A549 (cell line): ENCODE measurements at regions of chr7 and their contacts with region 1.

Region 1: DNA sequence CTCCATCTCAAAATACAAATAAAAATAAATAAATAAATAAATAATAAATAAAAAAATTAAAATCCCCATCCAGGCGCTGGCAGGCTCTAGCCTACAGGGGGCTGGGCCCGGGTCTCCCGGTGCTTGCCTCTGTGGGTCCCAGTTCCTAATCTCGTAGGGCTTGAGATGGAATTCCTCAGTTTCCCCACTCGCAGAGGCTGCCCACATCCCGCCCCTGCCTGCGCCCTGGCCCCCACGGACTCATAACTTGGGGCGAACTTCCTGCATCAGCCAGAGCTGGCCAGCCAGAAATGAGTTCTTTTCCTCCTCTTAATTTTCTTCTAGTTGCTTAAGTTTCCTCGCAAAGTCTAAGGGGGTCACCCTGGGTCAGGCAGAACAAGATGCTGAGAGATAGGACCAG is 22.0 kb upstream of the SRRM3 start:
- DNase-seq: no peak
- ATAC-seq: no peak
- H3K4me3 ChIP-seq: no peak overlapping the region
- H3K27ac ChIP-seq: no peak overlapping the region
- H3K4me1 ChIP-seq: no peaks in the 10 kb centered on the region
- CTCF ChIP-seq: no peak
- EP300 ChIP-seq: no peak
- POLR2A ChIP-seq: no peak
- RAD21 ChIP-seq: no peak

Region 2: DNA sequence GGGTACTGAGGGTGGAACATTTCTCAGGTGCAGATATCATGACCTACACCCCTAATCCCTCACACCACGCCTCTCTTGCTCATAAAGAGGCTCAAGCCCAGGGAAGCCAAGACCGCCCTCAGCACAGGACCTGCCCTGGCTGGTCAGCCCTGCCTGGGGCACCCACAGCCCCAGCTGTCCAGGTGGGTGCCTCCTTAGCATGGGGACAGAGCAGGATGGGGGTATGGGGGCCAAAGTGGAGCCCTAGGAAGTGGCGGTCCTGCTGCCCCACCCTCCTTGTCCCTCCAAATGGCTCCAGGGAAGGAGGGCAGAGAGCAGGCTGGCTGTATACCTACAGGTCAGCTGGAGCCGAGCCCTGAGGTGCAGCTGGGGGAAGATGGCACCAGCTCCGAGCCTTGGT is 280.6 kb before region 1 on chr7:
- CTCF ChIA-PET with region 1: no interaction called
- POLR2A ChIA-PET with region 1: no interaction called
- DNase-seq: no peak
- ATAC-seq: peak; percentile 31 to 48; a peak in 2 of 6 replicates
- H3K4me3 ChIP-seq: no peak overlapping the region
- H3K27ac ChIP-seq: no peak overlapping the region
- H3K4me1 ChIP-seq: no peaks in the 10 kb centered on the region
- CTCF ChIP-seq: no peak
- EP300 ChIP-seq: no peak
- POLR2A ChIP-seq: no peak
- RAD21 ChIP-seq: no peak

Region 3: GRCh38 chr7:76069238-76069638 is 110.4 kb before region 1 on chr7:
- CTCF ChIA-PET with region 1: interaction called, 12 read pairs
- POLR2A ChIA-PET with region 1: no interaction called
- DNase-seq: peak; percentile 84 to 94
- ATAC-seq: peak; percentile 88 to 92
- H3K4me3 ChIP-seq: no peak overlapping the region
- H3K27ac ChIP-seq: peak overlapping the region; percentile 80 to 81
- H3K4me1 ChIP-seq: peaks cover 40% of the 10 kb centered on the region
- CTCF ChIP-seq: peak; percentile 55
- EP300 ChIP-seq: no peak
- POLR2A ChIP-seq: no peak
- RAD21 ChIP-seq: peak; percentile 84 to 85

Region 4: GRCh38 chr7:76191783-76192275 is 12.1 kb after region 1 on chr7:
- CTCF ChIA-PET with region 1: interaction called, 78 read pairs
- POLR2A ChIA-PET with region 1: no interaction called
- DNase-seq: peak in 1 of 2 experiments; percentile 76
- ATAC-seq: peak; percentile 47 to 84; a peak in 3 of 6 replicates
- H3K4me3 ChIP-seq: no peak overlapping the region
- H3K27ac ChIP-seq: no peak overlapping the region
- H3K4me1 ChIP-seq: no peaks in the 10 kb centered on the region
- CTCF ChIP-seq: no peak
- EP300 ChIP-seq: no peak
- POLR2A ChIP-seq: no peak
- RAD21 ChIP-seq: no peak

Region 5: GRCh38 chr7:76234931-76235441 is 55.3 kb after region 1 on chr7:
- CTCF ChIA-PET with region 1: interaction called, 22 read pairs
- POLR2A ChIA-PET with region 1: no interaction called
- DNase-seq: peak; percentile 66 to 87
- ATAC-seq: peak; percentile 70 to 88
- H3K4me3 ChIP-seq: peak overlapping the region; percentile 27; the same call in 1 of the 3 replicates
- H3K27ac ChIP-seq: peak overlapping the region in 1 of 2 experiments; percentile 31; a peak in 1 of 6 replicates
- H3K4me1 ChIP-seq: peaks cover 11% of the 10 kb centered on the region; the same call in 1 of the 3 replicates
- CTCF ChIP-seq: no peak
- EP300 ChIP-seq: no peak
- POLR2A ChIP-seq: no peak
- RAD21 ChIP-seq: no peak

Region 6: DNA sequence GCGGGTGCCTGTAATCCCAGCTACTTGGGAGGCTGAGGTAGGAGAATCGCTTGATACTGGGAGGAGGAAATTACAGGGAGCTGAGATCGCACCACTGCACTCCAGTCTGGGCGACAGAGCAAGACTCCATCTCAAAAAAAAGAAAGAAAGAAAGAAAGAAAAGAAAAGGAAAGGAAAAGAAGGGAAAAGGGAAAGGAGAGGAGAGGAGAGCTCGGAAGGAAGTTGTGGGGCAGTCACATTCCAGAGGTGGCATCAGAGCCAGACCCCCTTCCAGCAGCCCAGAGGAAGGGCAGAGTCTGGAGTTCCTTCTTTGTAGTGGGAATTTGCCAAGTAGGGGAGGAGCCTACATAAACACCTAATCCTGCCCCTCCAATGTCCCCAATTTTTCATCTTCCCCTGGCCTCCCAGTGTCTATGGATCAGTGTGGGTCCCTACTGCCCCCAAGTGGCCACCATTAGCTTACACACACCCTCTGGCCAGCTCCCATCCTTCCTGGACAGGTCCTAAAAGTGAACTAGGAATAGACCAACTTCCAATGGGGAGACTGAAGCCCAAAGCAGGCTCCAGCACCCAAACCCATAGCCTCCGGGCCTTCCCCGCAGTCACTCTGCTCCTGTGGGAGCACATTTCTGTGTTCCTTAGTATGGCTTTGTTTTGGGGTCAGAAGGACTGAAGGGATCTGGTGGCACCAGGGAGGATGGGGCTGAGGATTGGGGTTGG is 83.2 kb after region 1 on chr7:
- CTCF ChIA-PET with region 1: interaction called, 127 read pairs
- POLR2A ChIA-PET with region 1: no interaction called
- DNase-seq: peak; percentile 66 to 85
- ATAC-seq: peak; percentile 79 to 88
- H3K4me3 ChIP-seq: no peak overlapping the region
- H3K27ac ChIP-seq: no peak overlapping the region
- H3K4me1 ChIP-seq: peaks cover 7% of the 10 kb centered on the region; the same call in 2 of the 3 replicates
- CTCF ChIP-seq: peak; percentile 81
- EP300 ChIP-seq: no peak
- POLR2A ChIP-seq: no peak
- RAD21 ChIP-seq: peak; percentile 83 to 92

Region 7: GRCh38 chr7:76291343-76292212 is 111.9 kb after region 1 on chr7:
- CTCF ChIA-PET with region 1: interaction called, 71 read pairs
- POLR2A ChIA-PET with region 1: interaction called, 3 read pairs
- DNase-seq: peak; percentile 91 to 96
- ATAC-seq: peak; percentile 78 to 84
- H3K4me3 ChIP-seq: peak overlapping the region; percentile 37
- H3K27ac ChIP-seq: peak overlapping the region; percentile 92 to 97
- H3K4me1 ChIP-seq: peaks cover 49% of the 10 kb centered on the region
- CTCF ChIP-seq: peak; percentile 96
- EP300 ChIP-seq: no peak
- POLR2A ChIP-seq: peak; percentile 48
- RAD21 ChIP-seq: peak; percentile 96 to 98